Right ventricle myocardium inferior (tissue), 1 donor: ENCODE measurements at regions of chr11 and their contacts with region 1.

Region 1: GRCh38 chr11:126440792-126441514 is 85.5 kb downstream of the ST3GAL4 start:
- DNase-seq: peak; percentile 89
- ATAC-seq: peak; percentile 62

Region 2: DNA sequence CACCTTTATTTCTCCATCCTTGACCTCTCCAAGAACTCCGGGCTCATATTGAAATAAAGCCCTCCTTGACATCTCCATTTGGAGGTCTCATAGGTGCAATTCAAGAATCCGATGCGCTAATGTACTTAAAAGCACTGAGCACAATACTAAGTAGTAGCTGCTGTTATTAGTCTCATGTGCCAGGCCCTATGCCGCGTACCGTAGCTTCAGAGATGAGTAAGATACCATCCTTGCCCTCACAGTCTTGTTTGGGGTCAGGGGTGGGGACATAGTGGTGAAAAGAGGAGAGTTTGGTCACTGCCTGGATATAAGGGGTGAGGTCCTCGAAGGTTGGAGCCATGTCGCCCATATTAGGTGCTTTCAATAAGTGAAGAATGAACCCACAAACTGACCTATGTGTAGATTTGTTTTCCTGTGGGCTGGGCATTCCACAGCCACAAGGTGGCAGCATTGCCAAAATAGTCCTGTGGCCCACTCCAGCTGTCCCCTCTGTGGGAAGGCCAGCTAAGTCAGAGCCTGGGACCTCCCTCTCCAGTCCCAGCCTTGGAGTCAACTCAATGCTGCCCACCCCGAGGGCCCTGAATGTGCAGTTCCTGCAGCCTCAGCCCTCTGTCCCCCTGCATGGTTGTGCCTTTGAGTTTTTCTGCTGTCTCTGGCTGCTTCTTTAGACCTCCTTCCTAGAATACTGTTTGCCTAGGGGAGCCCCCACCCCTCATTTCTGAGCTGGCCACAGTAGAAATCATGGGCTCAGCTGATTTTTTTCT is 130.5 kb before region 1 on chr11:
- intact Hi-C with region 1: loop called (anchors 2 kb)
- DNase-seq: peak; percentile 82
- ATAC-seq: peak; percentile 95

Region 3: DNA sequence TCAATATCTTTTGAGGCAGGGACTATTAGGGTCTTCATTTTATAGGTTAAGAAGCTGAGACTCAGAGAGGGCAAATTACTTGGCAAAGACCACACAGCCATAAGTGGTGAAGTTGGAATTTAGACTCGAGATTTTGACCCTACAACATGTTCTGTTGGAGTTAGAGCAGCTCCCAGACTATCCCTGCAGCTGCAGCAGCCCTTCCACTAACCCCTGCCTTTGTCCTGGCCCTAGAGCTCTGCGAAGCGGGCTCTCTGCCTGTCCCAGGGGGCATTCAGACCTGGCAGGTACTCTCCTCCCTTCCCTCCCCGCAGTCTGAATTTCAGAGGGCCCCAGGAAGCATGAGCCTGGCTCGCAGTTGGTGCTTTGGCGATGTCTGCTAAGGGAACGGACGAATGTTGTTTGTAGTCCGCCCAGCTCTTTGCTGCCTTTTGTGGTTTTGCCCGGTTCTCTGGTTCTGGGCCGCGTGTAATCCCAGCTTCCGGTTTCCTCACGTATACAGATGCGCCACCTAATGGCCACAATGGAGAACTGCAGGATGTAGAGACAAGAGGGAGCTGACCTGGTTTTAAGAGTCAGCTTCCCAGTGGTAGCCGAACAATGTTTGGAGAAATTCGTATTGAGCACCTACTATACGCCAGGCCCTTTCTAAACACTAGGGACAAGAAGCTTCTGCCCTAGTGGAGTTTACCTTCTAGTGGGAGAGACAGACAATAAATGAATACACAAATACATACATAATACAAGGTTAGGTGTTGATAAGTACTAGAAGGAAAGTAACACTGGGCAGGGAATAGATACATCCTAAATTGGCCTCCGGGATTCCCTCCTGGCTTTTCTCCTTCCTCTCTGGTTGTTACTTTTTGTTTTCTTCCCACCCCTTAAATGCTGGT is 39.7 kb after region 1 on chr11:
- intact Hi-C with region 1: loop called (anchors 1 kb)
- DNase-seq: peak; percentile 89
- ATAC-seq: peak; percentile 89

Region 4: GRCh38 chr11:126491092-126491491 is 50.1 kb after region 1 on chr11:
- intact Hi-C with region 1: no loop called
- DNase-seq: peak; percentile 40
- ATAC-seq: no peak

Region 5: GRCh38 chr11:126989942-126990715 is 549.2 kb after region 1 on chr11:
- intact Hi-C with region 1: loop called (anchors 5 kb)
- DNase-seq: peak; percentile 72
- ATAC-seq: peak; percentile 76

Region 6: GRCh38 chr11:127345819-127346459 is 905.0 kb after region 1 on chr11:
- intact Hi-C with region 1: loop called (anchors 2 kb)
- DNase-seq: no peak
- ATAC-seq: no peak

Region 7: GRCh38 chr11:127493330-127494022 is 1052.5 kb after region 1 on chr11:
- intact Hi-C with region 1: loop called (anchors 5 kb)
- DNase-seq: no peak
- ATAC-seq: no peak